ENCODE measurements at regions of chr10 and their contacts with region 1.

Region 1: DNA sequence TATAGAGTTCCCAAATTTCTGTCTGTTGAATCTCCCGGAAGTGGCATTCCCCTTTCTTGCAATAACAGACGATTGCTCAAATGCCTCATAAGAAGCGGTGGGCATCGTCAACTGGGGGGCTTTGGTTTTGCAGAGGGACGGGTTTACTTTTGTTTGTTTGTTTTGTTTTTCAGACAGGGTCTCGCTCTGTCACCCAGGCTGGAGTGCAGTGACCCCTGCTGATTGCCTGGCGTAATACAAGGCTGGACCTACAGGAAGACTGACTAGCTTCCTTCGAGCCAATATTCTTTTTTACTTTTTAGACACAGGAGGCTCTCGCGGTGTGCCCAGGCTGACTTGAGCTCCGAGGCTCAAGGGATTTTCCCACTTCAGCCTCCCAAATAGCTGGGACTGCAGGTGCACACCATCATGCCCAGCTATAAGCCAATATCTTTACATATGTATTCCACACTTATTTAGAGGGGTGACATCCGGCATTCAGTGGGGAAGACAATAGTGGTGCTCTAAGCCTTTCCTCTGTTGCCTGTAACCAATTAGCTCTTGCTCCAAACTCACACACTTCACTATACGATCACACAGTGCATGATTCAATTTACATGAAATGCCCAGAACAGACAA is 58.1 kb downstream of the FHIP2A start:
- DNase-seq: no peak
- H3K4me3 ChIP-seq: no peak overlapping the region
- H3K27ac ChIP-seq: no peak overlapping the region
- H3K4me1 ChIP-seq: no peaks in the 10 kb centered on the region
- H3K27me3 ChIP-seq: no peaks in the 10 kb centered on the region
- CTCF ChIP-seq: peak in 1 of 3 donors; percentile 9
- POLR2A ChIP-seq: no peak

Region 2: GRCh38 chr10:113480851-113481502 is 1398.7 kb before region 1 on chr10:
- intact Hi-C with region 1: no loop called
- DNase-seq: peak in 1 of 2 donors; percentile 52
- H3K4me3 ChIP-seq: no peak overlapping the region
- H3K27ac ChIP-seq: peak overlapping the region in 1 of 2 donors; percentile 16
- H3K4me1 ChIP-seq: no peaks in the 10 kb centered on the region
- H3K27me3 ChIP-seq: no peaks in the 10 kb centered on the region
- CTCF ChIP-seq: no peak
- POLR2A ChIP-seq: no peak

Region 3: GRCh38 chr10:114349596-114350191 is 530.0 kb before region 1 on chr10:
- intact Hi-C with region 1: loop called (anchors 5 kb)
- DNase-seq: peak in 1 of 2 donors; percentile 31
- H3K4me3 ChIP-seq: no peak overlapping the region
- H3K27ac ChIP-seq: peak overlapping the region; percentile 41 to 54
- H3K4me1 ChIP-seq: peaks cover 0 to 4% of the 10 kb centered on the region in 2 donors
- H3K27me3 ChIP-seq: no peaks in the 10 kb centered on the region
- CTCF ChIP-seq: no peak
- POLR2A ChIP-seq: no peak

Region 4: DNA sequence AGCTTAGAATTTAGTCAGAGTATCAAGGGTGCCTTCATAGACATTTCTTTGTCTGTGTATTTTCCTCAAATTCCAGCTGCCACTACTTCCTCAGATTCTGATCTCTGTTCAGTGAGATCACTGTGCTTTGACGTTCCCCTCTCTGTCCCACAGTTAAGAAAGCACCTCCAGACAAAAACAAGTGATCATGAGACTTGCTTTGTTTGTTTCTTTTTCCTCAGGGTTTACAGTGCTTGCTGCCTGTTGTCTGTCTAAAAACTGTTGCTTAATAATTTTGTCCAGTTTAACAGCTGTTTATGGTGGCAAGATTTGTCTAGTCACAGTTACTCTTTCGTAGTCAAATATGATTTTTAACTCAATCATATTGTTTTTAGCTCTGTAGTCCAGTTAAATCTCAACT is 87.4 kb after region 1 on chr10:
- intact Hi-C with region 1: loop called (anchors 5 kb)
- DNase-seq: no peak
- H3K4me3 ChIP-seq: no peak overlapping the region
- H3K27ac ChIP-seq: peak overlapping the region in 1 of 2 donors; percentile 8
- H3K4me1 ChIP-seq: no peaks in the 10 kb centered on the region
- H3K27me3 ChIP-seq: no peaks in the 10 kb centered on the region
- CTCF ChIP-seq: no peak
- POLR2A ChIP-seq: no peak